ENCODE measurements at regions of chr6 and their contacts with region 1.

Region 1: GRCh38 chr6:31087494-31088089 is 24.8 kb downstream of the C6orf15 start:
- DNase-seq: peak; percentile 88
- H3K4me3 Mint-ChIP-seq: no peak overlapping the region
- H3K27ac Mint-ChIP-seq: no peak overlapping the region
- H3K4me1 Mint-ChIP-seq: peaks cover 15% of the 10 kb centered on the region
- H3K27me3 Mint-ChIP-seq: peaks cover 14% of the 10 kb centered on the region

Region 2: DNA sequence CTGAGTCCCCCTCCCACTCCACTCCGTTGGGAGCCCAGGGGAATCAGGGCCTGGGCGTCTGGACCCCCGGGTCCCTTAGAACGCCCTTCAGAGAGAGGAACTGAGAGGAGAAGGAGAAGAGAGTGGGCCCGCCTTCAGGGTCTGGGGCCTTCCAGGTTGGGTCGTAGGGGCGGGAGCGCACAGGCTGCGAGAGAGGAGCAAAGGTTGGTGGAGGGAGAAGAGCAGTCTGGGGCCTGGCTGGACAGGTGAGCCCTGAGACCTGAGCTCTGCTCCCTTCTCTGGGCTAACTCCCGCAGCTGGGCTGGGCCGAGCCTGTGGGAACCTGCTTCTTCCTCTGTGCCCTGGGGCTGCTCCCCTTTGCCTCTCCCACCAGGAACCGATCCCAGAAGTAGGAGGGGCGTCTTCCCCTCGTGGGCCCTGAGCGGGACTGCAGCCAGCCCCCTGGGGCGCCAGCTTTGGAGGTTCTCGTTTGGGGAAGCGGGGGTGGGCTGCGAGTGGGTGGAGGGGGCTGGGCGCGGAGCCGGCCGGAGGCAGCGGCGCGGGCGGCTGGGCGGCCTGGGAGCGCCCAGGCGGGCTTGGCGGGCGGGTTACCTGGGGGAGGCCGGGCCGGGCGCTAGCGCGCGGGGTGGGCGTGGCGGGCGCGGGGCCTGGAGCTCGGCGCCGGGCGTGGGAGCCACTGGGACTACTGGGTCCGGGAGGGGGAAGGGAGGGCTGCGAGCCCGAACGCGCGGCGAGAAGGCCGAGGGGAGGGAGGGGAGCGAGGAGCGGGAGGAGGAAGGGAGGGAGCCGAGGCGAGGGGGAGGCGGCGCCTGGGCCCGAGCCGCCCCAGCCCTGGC is 203.7 kb before region 1 on chr6 and contains the start of gene DDR1:
- CTCF ChIA-PET with region 1: interaction called, 12 read pairs
- POLR2A ChIA-PET with region 1: no interaction called
- DNase-seq: peak; percentile 44
- H3K4me3 Mint-ChIP-seq: peak within 1 kb of the TSS; percentile 66
- H3K27ac Mint-ChIP-seq: no peak within 1 kb of the TSS
- H3K4me1 Mint-ChIP-seq: peaks cover 14% of the 10 kb centered on the region
- H3K27me3 Mint-ChIP-seq: peaks cover 35% of the 10 kb centered on the region
- total RNA-seq, gene DDR1: 1.8 to 3.2 TPM

Region 3: GRCh38 chr6:30914076-30914853 is 173.3 kb before region 1 on chr6 and contains the start of gene VARS2:
- CTCF ChIA-PET with region 1: interaction called, 42 read pairs
- POLR2A ChIA-PET with region 1: interaction called, 4 read pairs
- DNase-seq: peak; percentile 90
- H3K4me3 Mint-ChIP-seq: peak within 1 kb of the TSS; percentile 87
- H3K27ac Mint-ChIP-seq: peak within 1 kb of the TSS; percentile 83
- H3K4me1 Mint-ChIP-seq: peaks cover 29% of the 10 kb centered on the region
- H3K27me3 Mint-ChIP-seq: no peaks in the 10 kb centered on the region
- total RNA-seq, gene VARS2: 33.6 to 37.0 TPM

Region 4: DNA sequence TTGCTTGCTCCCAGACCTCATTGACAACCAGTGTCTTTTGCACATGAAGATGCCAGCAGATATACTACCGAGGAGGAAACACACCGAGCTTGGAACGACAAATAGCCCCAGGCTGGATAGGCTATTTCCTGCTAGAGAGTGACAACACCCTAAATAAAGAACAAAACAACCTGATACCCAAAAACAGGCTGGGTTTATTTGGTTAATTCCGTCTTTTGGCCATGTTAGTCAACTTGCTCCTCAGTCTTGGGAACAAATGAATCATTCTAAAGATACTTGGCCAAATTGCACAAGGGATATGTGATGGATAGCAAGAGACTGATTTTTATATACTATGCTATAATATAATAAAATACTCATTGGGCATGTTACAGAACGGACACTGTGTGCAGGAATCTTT is 88.8 kb before region 1 on chr6:
- CTCF ChIA-PET with region 1: no interaction called
- POLR2A ChIA-PET with region 1: no interaction called
- DNase-seq: no peak
- H3K4me3 Mint-ChIP-seq: no peak overlapping the region
- H3K27ac Mint-ChIP-seq: no peak overlapping the region
- H3K4me1 Mint-ChIP-seq: peaks cover 2% of the 10 kb centered on the region
- H3K27me3 Mint-ChIP-seq: no peaks in the 10 kb centered on the region

Region 5: DNA sequence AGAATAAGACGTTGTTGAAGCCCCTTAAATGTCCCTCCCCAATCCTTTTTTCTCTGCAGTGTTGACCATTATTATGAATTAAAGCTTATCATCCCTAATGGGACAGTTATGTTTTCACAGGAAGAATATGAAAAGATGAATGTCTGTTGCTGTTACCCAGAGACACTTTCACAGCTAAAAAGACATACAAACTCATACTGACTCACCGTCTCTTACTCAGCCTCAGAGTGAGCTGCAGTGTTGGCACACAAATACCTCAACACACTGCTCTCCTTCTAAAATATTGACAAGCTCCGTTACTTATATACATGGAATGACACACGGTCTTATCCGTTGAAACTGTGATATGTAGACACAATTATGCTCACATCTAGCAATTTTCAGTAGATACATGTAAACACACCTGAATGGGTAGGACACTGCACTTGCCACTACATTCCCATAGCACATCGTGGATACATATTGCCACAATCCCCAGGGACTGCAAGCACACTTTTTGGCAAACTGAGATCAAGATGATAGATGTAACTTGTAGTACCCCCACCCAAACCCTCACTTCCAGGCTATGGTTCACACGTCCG is 665.2 kb after region 1 on chr6:
- CTCF ChIA-PET with region 1: no interaction called
- POLR2A ChIA-PET with region 1: no interaction called
- DNase-seq: no peak
- H3K4me3 Mint-ChIP-seq: no peak overlapping the region
- H3K27ac Mint-ChIP-seq: no peak overlapping the region
- H3K4me1 Mint-ChIP-seq: no peaks in the 10 kb centered on the region
- H3K27me3 Mint-ChIP-seq: no peaks in the 10 kb centered on the region

Measured in activated CD4-positive, alpha-beta memory T cell treated with anti-CD3 and anti-CD28 coated beads, Interleukin-2, amount 10 ng/mL, durations not matched to agents 7 days and 5 days (primary cell).